IMR-90 (cell line): ENCODE measurements at regions of chr12 and their contacts with region 1.

Region 1: DNA sequence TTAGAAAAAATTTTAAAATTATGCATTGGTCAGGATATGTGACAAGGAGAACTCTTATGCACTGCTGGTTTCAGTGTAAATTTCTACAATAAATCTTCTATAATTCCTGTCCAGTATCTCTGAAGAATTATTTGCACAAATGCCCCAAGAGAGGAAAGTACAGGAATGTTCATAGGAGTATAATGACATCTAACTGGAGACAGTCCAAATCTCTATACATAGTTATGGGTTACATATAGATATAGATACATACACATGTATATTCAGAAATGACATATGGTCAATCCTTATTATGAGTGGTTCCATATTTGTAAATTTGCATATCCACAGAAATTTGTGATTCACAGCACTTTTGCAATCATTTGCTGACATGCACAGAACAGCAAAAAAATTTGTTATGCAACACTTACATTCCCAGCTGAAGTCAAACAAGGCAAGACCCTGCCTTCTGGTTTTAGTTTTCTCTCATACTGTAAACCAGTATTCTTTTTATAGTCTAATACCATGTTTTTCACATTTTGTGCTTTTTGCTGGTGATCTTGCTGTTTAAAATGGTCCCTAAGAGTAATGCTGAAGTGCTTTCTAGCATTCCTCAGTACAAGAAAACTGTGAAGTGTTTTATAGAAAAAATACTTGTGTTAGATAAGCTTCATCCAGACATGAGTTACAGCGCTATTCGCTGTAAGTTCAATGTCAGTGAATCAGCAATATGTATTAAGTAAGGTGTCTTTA is 103.8 kb downstream of the SLC16A7 start:
- DNase-seq: peak; percentile 86
- ATAC-seq: peak; percentile 83
- H3K4me3 ChIP-seq: no peak overlapping the region
- H3K27ac ChIP-seq: peak overlapping the region; percentile 48; the same call in 1 of the 2 replicates
- H3K4me1 ChIP-seq: peaks cover 2% of the 10 kb centered on the region; the same call in 1 of the 2 replicates
- H3K27me3 ChIP-seq: no peaks in the 10 kb centered on the region
- CTCF ChIP-seq: no peak
- POLR2A ChIP-seq: no peak
- RAD21 ChIP-seq: no peak

Region 2: GRCh38 chr12:59678759-59679411 is 20.7 kb before region 1 on chr12:
- CTCF ChIA-PET with region 1: no interaction called
- POLR2A ChIA-PET with region 1: no interaction called
- dilution Hi-C with region 1: no loop called
- in situ Hi-C with region 1: no loop called
- intact Hi-C with region 1: no loop called
- DNase-seq: no peak
- ATAC-seq: no peak
- H3K4me3 ChIP-seq: no peak overlapping the region
- H3K27ac ChIP-seq: no peak overlapping the region
- H3K4me1 ChIP-seq: no peaks in the 10 kb centered on the region
- H3K27me3 ChIP-seq: no peaks in the 10 kb centered on the region
- CTCF ChIP-seq: no peak
- POLR2A ChIP-seq: no peak
- RAD21 ChIP-seq: no peak

Region 3: DNA sequence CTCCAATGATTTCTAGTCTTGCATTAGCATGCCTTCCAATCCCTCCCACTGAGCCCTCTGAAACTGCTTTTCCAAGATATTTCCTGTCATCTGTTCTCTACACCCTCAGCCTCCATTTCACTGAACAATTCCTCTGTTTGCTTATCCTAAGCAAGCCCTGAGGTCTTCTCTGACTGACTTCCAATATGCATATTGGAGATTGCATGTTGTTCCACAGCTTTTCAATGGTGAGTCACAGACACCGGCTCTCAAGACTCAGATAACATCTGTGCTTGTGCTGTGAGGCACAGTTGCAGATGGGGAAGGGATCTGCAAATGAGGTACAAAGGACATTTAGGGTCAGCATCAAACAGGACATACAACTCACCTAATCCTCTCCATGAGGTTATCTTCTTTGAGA is 37.2 kb after region 1 on chr12:
- CTCF ChIA-PET with region 1: no interaction called
- POLR2A ChIA-PET with region 1: no interaction called
- dilution Hi-C with region 1: no loop called
- in situ Hi-C with region 1: no loop called
- intact Hi-C with region 1: loop called (anchors 5 kb)
- DNase-seq: peak; percentile 96
- ATAC-seq: peak; percentile 89
- H3K4me3 ChIP-seq: no peak overlapping the region
- H3K27ac ChIP-seq: no peak overlapping the region
- H3K4me1 ChIP-seq: peaks cover 3% of the 10 kb centered on the region
- H3K27me3 ChIP-seq: no peaks in the 10 kb centered on the region
- CTCF ChIP-seq: no peak
- POLR2A ChIP-seq: no peak
- RAD21 ChIP-seq: no peak